HepG2 (cell line): ENCODE measurements at regions of chr17 and their contacts with region 1.

Region 1: DNA sequence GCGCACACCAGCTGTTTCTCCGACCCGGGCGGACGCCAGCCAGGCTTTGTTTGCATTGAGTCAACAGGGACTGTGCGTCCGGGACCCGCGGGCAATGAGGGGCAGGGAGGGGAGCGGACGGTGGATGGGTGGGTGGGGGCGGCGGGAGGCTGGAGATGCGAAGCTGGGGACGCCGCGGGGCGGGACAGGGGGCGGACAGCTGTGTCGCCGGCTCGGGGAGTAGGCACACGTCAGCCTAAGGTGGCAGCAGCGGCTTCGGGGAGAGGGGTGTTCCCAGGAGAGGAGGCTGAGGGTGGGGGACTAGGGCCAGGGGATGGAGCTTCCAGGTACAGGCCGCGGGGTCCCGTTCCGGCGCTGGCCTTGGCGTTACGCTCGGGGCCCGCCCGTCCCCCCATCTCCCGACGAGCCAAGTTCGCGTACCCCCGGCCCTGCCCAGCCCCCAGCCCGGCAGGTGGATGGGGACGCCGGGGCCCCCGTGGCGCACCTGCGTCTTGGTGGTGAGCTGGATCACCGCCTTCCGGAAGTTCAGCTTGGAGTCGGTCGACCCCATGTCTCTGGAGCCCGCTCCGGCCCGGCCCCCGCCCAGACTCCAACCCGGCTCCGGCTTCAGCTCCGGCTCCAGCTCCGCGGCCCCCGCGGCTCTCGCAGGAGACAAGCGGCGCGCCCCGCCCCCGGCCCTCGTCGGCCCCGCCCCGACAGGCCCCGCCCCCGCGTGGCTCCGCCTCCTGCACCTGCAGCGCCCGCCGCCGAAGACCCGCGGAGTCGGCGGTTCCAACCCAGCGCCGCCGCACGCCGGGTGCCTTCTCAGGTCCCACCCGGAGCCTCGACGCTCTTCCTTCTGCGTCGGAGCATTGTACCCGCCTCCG is at the start of gene HID1:
- DNase-seq: peak; percentile 73
- ATAC-seq: peak; percentile 90
- H3K4me3 ChIP-seq: peak within 1 kb of the TSS; percentile 67 to 83 (median 70)
- H3K27ac ChIP-seq: no peak within 1 kb of the TSS
- H3K4me1 ChIP-seq: peaks cover 54% of the 10 kb centered on the region
- H3K27me3 ChIP-seq: peaks cover 5 to 50% of the 10 kb centered on the region in 2 experiments; a peak in 4 of 5 replicates
- CTCF ChIP-seq: 0 out of 2 replicates have a peak, but pooled peaks have one; percentile 17
- EP300 ChIP-seq: no peak
- POLR2A ChIP-seq: no peak
- RAD21 ChIP-seq: peak; percentile 15; the same call in 1 of the 2 replicates
- total RNA-seq, gene HID1: 1.7 and 2.1 TPM in 2 replicates

Region 2: GRCh38 chr17:74945543-74945942 is 26.8 kb before region 1 on chr17:
- CTCF ChIA-PET with region 1: no interaction called
- POLR2A ChIA-PET with region 1: no interaction called
- in situ Hi-C with region 1: no loop called
- intact Hi-C with region 1: no loop called
- DNase-seq: no peak
- ATAC-seq: no peak
- H3K4me3 ChIP-seq: no peak overlapping the region
- H3K27ac ChIP-seq: no peak overlapping the region
- H3K4me1 ChIP-seq: no peaks in the 10 kb centered on the region
- H3K27me3 ChIP-seq: peaks cover 22 to 77% of the 10 kb centered on the region in 2 experiments; a peak in 4 of 5 replicates
- CTCF ChIP-seq: no peak
- EP300 ChIP-seq: no peak
- POLR2A ChIP-seq: no peak
- RAD21 ChIP-seq: no peak

Region 3: GRCh38 chr17:74987418-74987908 is 15.1 kb after region 1 on chr17 and contains the start of gene CDR2L:
- CTCF ChIA-PET with region 1: no interaction called
- POLR2A ChIA-PET with region 1: interaction called, 32 read pairs
- in situ Hi-C with region 1: no loop called
- intact Hi-C with region 1: no loop called
- DNase-seq: peak; percentile 86
- ATAC-seq: peak; percentile 91
- H3K4me3 ChIP-seq: peak within 1 kb of the TSS; percentile 63 to 82 (median 80)
- H3K27ac ChIP-seq: no peak within 1 kb of the TSS
- H3K4me1 ChIP-seq: peaks cover 54% of the 10 kb centered on the region
- H3K27me3 ChIP-seq: peaks cover 0 to 9% of the 10 kb centered on the region in 2 experiments; a peak in 2 of 5 replicates
- CTCF ChIP-seq: peak; percentile 37; the same call in 1 of the 2 replicates
- EP300 ChIP-seq: no peak
- POLR2A ChIP-seq: peak in 1 of 2 experiments; percentile 65; a peak in 2 of 4 replicates
- RAD21 ChIP-seq: peak; percentile 43
- total RNA-seq, gene CDR2L: 1.9 and 2.1 TPM in 2 replicates

Region 4: DNA sequence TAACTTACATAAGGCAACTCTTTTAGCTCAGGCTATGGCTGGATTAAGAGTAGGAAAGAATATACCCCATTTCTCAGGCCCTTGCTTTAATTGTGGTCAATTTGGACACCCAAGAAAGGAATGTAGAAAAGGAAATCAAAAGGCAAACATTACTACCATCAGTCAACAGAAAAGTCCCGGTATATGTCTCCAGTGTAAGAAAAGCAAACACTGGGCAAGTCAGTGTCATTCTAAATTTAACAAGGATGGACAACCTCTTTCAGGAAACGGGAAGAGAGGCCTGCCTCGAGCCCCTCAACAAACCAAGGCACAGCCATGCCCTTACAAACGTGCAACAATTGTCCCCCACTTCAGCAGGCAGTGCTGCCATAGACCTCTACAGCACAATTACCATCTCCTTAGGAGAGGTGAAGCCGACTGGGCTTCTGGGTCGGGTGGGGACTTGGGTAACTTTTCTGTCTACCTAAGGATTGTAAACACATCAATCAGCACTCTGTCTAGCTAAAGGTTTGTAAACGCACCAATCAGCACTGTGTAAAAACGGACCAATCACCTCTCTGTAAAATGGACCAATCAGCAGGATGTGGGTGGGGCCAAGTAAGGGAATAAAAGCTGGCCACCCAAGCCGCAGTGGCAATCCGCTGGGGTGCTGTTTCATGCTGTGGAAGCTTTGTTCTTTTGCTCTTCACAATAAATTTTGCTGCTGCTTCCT is 52.5 kb after region 1 on chr17:
- CTCF ChIA-PET with region 1: no interaction called
- POLR2A ChIA-PET with region 1: interaction called, 10 read pairs
- in situ Hi-C with region 1: no loop called
- intact Hi-C with region 1: no loop called
- DNase-seq: peak; percentile 61
- ATAC-seq: peak; percentile 75
- H3K4me3 ChIP-seq: peak overlapping the region in 1 of 3 experiments; percentile 46; a peak in 3 of 6 replicates
- H3K27ac ChIP-seq: peak overlapping the region; percentile 43
- H3K4me1 ChIP-seq: peaks cover 25% of the 10 kb centered on the region
- H3K27me3 ChIP-seq: peaks cover 0 to 3% of the 10 kb centered on the region in 2 experiments; a peak in 1 of 5 replicates
- CTCF ChIP-seq: no peak
- EP300 ChIP-seq: no peak
- POLR2A ChIP-seq: peak; percentile 56 to 60; a peak in 2 of 4 replicates
- RAD21 ChIP-seq: no peak

Region 5: GRCh38 chr17:75301502-75302206 is 329.3 kb after region 1 on chr17:
- CTCF ChIA-PET with region 1: no interaction called
- POLR2A ChIA-PET with region 1: no interaction called
- in situ Hi-C with region 1: no loop called
- intact Hi-C with region 1: no loop called
- DNase-seq: no peak
- ATAC-seq: peak; percentile 25; the same call in 2 of the 3 replicates
- H3K4me3 ChIP-seq: no peak overlapping the region
- H3K27ac ChIP-seq: no peak overlapping the region
- H3K4me1 ChIP-seq: peaks cover 17% of the 10 kb centered on the region
- H3K27me3 ChIP-seq: no peaks in the 10 kb centered on the region
- CTCF ChIP-seq: no peak
- EP300 ChIP-seq: no peak
- POLR2A ChIP-seq: no peak
- RAD21 ChIP-seq: no peak